SK-N-SH (cell line): ENCODE measurements at regions of chr7 and their contacts with region 1.

Region 1: DNA sequence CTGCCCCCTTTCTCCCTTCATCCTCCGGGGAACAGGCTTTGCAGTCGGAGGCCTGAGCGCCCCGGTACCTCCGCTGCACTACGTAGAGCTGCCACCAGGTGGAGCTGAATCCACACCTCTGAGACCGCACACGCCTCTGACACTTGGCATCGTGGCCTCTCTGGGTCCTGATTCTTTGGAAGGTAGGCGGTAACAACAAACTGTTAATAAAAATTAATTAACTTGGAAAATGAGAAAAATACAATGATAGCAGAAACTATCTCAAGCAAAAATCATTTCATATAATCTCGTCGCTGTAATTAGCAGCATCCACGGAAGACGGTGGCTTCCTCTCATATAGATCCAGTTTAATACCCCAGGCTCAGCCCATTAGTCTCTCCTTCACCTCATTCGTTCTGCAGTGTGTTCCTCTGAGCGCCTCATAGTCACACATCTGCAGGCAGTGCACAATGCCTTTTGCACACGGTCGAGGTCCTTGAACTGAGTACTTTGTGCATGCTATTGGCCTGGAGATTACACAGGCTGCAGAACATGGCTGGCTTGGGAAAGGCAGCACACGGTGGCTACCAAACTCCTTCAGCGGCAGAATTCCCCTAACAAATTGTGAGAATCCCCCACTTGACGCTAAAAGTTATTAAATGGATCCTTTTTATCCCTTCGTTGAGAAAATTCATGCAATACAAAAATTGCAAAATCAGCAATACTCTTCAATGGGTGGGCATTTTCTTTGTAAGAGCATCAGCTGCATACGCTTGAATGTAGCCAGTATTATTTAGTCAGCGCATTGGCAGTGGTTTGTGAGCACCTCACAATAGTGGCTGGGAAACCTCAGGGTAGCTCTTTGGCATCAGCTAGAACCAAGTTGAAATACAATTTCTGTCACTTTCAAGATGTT is 18.7 kb downstream of the OR9A2 start:
- DNase-seq: peak; percentile 78
- H3K4me3 ChIP-seq: no peak overlapping the region; a peak in 1 of 4 replicates
- H3K27ac ChIP-seq: no peak overlapping the region
- H3K4me1 ChIP-seq: 0 out of 4 replicates have a peak, but pooled peaks cover 0 to under 1% of the 10 kb centered on the region in 2 experiments
- H3K27me3 ChIP-seq: no peaks in the 10 kb centered on the region; the same call in 1 of the 2 replicates
- CTCF ChIP-seq: peak; percentile 100
- EP300 ChIP-seq: no peak
- RAD21 ChIP-seq: peak; percentile 96

Region 2: GRCh38 chr7:142853739-142854371 is 154.4 kb before region 1 on chr7:
- CTCF ChIA-PET with region 1: interaction called, 38 read pairs
- POLR2A ChIA-PET with region 1: no interaction called
- DNase-seq: peak; percentile 92
- H3K4me3 ChIP-seq: peak overlapping the region; percentile 61 to 89
- H3K27ac ChIP-seq: no peak overlapping the region; a peak in 1 of 4 replicates
- H3K4me1 ChIP-seq: peaks cover 0 to 14% of the 10 kb centered on the region in 2 experiments; a peak in 1 of 4 replicates
- H3K27me3 ChIP-seq: peaks cover 42% of the 10 kb centered on the region; the same call in 1 of the 2 replicates
- CTCF ChIP-seq: peak; percentile 96
- EP300 ChIP-seq: no peak
- RAD21 ChIP-seq: peak; percentile 81

Region 3: DNA sequence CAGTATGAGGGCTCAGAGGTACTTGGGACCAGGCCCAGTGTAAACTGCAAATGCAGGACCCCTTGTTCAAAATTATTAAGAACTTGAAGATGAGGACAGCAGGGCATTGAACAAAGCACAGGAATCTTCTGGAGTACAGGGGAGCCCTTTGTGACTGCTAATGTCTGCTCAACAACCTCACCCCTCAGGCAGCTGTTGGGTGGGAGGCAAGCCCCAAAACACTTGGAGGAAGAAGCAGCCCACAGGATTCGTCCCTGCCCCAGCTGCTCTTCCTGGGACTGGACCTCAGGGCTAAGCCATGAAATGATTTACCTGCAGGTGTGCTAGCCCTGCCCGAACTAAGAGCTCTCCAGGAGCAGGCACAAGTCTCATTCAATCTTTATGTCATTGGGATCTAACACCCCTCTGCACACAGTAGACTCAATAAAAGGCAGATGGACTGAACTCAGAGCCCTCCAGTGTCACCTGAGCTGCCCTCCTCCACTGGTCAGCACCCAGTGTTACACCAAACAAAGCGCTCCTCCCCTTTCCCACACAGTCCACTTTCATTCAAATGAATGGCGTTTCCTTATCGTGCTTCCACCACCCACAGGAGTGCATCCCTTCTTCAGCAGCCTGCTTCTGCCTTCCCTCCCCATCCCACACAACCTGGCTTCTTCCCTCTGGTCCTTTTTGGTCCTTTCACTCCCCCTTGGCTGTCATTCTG is 75.7 kb before region 1 on chr7:
- CTCF ChIA-PET with region 1: interaction called, 10 read pairs
- POLR2A ChIA-PET with region 1: no interaction called
- DNase-seq: no peak
- H3K4me3 ChIP-seq: no peak overlapping the region
- H3K27ac ChIP-seq: no peak overlapping the region
- H3K4me1 ChIP-seq: no peaks in the 10 kb centered on the region
- H3K27me3 ChIP-seq: peaks cover 43% of the 10 kb centered on the region; the same call in 1 of the 2 replicates
- CTCF ChIP-seq: no peak
- EP300 ChIP-seq: no peak
- RAD21 ChIP-seq: no peak

Region 4: GRCh38 chr7:142983825-142984224 is 24.4 kb before region 1 on chr7:
- CTCF ChIA-PET with region 1: interaction called, 74 read pairs
- POLR2A ChIA-PET with region 1: no interaction called
- DNase-seq: no peak
- H3K4me3 ChIP-seq: no peak overlapping the region
- H3K27ac ChIP-seq: no peak overlapping the region
- H3K4me1 ChIP-seq: no peaks in the 10 kb centered on the region
- H3K27me3 ChIP-seq: no peaks in the 10 kb centered on the region
- CTCF ChIP-seq: no peak
- EP300 ChIP-seq: no peak
- RAD21 ChIP-seq: no peak

Region 5: DNA sequence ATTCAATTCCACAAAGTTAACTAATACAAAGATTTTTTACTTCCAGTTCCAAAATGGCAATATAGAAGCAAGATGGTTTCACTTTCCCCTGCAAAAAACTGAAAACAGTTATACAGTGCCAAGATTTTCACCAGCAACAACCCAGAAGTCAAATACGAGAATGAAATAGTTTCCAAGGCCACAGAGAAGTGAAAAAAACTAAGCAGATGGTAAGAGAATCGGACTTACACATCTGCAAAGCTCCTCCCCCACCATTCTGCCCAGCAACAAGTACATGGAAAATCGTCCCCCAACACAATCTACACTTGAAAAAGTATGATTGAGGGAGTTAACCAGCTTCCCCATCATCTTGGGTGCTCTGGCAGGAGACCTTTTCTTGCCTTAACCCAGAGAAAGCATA is 15.8 kb before region 1 on chr7:
- CTCF ChIA-PET with region 1: interaction called, 74 read pairs
- POLR2A ChIA-PET with region 1: interaction called, 3 read pairs
- DNase-seq: no peak
- H3K4me3 ChIP-seq: peak overlapping the region; percentile 10 to 48; a peak in 2 of 4 replicates
- H3K27ac ChIP-seq: no peak overlapping the region
- H3K4me1 ChIP-seq: no peaks in the 10 kb centered on the region
- H3K27me3 ChIP-seq: no peaks in the 10 kb centered on the region; the same call in 1 of the 2 replicates
- CTCF ChIP-seq: no peak
- EP300 ChIP-seq: no peak
- RAD21 ChIP-seq: no peak

Region 6: DNA sequence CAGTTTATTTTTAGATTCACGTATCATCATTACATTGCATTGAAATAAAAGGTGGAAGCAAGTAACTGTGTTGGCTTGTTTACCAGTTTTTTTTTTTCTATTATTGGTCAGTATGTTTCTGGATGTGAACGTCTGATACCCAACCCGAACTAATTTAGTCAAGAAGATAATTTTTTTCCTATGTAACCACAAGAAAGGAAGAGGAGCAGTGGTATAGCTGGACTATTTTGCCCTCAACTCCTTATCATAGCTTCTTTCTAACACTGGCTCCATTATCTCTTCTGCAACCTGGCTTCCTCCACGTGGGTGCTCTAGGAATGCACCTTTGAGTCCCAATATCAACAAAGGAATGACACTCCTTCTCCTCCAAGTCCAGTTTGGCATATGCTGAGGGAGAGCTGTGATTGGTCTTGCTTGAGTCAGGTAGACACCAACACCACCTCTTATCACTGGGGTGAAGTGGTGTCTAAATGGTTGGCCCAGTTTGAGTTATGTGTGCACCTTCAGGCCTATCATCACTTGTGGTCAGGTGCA is 10.7 kb before region 1 on chr7:
- CTCF ChIA-PET with region 1: interaction called, 74 read pairs
- POLR2A ChIA-PET with region 1: interaction called, 3 read pairs
- DNase-seq: no peak
- H3K4me3 ChIP-seq: no peak overlapping the region
- H3K27ac ChIP-seq: no peak overlapping the region
- H3K4me1 ChIP-seq: no peaks in the 10 kb centered on the region
- H3K27me3 ChIP-seq: no peaks in the 10 kb centered on the region; the same call in 1 of the 2 replicates
- CTCF ChIP-seq: no peak
- EP300 ChIP-seq: no peak
- RAD21 ChIP-seq: no peak